ENCODE measurements at regions of chr3 and their contacts with region 1.

Region 1: GRCh38 chr3:107927361-107928083 is 163.3 kb downstream of the CD47 start:
- DNase-seq: peak; percentile 75
- H3K4me3 ChIP-seq: peak overlapping the region; percentile 38 to 59 (median 55)
- H3K27ac ChIP-seq: peak overlapping the region in 1 of 4 donors; percentile 5
- H3K4me1 ChIP-seq: peaks cover 0 to 11% (median 6%) of the 10 kb centered on the region in 4 donors
- H3K27me3 ChIP-seq: no peaks in the 10 kb centered on the region
- CTCF ChIP-seq: peak; percentile 77 to 94 (median 86)
- EP300 ChIP-seq: no peak
- POLR2A ChIP-seq: no peak

Region 2: DNA sequence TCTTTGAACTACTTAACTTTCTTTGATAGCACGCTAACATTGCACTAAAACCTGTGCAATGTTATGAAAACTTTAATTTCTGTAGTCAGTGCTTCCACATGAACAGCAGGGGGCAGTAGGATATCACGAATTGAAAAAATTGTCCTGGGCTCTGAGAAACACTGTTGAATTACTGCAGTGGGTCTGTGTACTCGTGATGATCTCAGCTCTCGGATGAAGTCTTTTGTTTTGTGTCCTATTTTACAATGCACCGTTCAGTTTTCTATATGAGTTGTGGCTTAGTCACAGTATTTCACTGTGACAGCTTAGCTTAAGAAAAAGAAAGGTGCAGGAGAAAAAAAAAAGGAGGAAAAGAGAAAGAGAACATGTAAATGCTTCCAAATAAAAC is 691.6 kb before region 1 on chr3:
- intact Hi-C with region 1: loop called (anchors 2 kb)
- DNase-seq: peak; percentile 64
- H3K4me3 ChIP-seq: peak overlapping the region; percentile 28 to 53 (median 50)
- H3K27ac ChIP-seq: peak overlapping the region; percentile 66 to 74 (median 68)
- H3K4me1 ChIP-seq: peaks cover 0 to 22% (median 8%) of the 10 kb centered on the region in 4 donors
- H3K27me3 ChIP-seq: no peaks in the 10 kb centered on the region
- CTCF ChIP-seq: peak; percentile 79 to 91 (median 83)
- EP300 ChIP-seq: no peak
- POLR2A ChIP-seq: no peak

Region 3: DNA sequence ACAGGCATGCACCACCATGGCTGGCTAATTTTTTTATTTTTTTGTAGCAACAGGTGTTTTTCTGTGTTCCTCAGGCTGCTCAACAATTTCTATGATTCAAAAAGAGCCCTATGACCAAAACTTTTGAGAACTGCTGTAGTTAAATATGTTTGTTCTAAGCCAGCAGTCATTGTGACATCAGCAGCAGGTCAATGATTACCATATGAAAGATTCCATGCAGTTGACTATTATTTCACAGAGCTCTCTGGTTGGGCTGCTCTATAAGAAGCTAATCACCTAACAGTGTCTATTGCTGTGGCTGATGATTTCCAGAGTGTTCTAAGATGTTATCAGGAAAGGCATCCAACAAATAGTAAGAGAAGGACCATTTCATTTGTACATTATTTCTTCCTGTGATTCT is 550.4 kb before region 1 on chr3 and contains the start of gene CCDC54:
- intact Hi-C with region 1: no loop called
- DNase-seq: no peak
- H3K4me3 ChIP-seq: no peak within 1 kb of the TSS
- H3K27ac ChIP-seq: no peak within 1 kb of the TSS
- H3K4me1 ChIP-seq: no peaks in the 10 kb centered on the region
- H3K27me3 ChIP-seq: no peaks in the 10 kb centered on the region
- CTCF ChIP-seq: no peak
- EP300 ChIP-seq: no peak
- POLR2A ChIP-seq: no peak
- total RNA-seq, gene CCDC54: not detected

Region 4: GRCh38 chr3:107810171-107811071 is 117.1 kb before region 1 on chr3:
- intact Hi-C with region 1: loop called (anchors 10 kb)
- DNase-seq: no peak
- H3K4me3 ChIP-seq: no peak overlapping the region
- H3K27ac ChIP-seq: no peak overlapping the region
- H3K4me1 ChIP-seq: peaks cover 0 to 11% (median 0%) of the 10 kb centered on the region in 4 donors
- H3K27me3 ChIP-seq: no peaks in the 10 kb centered on the region
- CTCF ChIP-seq: no peak
- EP300 ChIP-seq: no peak
- POLR2A ChIP-seq: no peak

Region 5: DNA sequence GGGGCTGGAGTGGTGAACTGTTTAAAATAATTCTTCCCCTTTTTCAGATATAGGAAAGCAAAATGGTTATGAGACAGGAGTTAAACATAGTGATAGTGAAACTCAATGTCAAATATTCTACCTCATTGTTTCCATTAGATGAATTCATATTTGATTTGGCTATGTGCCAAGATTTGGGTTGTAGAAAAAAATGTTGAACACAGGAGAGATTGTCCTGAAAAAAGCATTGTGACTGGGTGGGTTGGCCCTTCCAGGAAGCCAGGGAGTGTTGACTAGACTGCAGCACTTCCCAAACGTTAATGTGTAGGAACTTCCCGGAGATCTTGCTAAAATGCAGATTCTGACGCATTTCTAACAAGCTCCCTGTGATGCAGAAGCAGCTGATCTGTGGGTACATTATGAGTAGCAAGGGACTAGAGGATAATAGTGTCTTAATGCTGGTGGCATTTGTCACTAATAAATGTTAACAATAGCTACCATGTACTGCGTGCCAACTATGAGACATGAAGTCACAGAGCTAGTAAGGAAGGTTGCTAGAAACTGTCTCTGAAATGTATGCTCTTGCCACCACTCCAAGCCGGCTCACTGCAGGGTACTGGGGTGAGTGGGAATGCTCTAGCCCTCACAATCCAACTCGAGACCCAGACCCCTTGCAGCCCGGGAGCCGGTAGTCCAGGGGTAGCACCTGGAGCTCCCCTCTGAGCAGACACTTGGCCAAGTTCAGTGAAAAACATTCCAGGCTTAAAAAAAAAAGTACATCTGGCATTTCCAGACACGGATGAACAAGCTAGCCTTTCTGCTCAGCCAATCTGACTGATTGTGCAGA is 42.7 kb after region 1 on chr3:
- intact Hi-C with region 1: loop called (anchors 1 kb)
- DNase-seq: no peak
- H3K4me3 ChIP-seq: no peak overlapping the region
- H3K27ac ChIP-seq: no peak overlapping the region
- H3K4me1 ChIP-seq: peaks cover 0 to 15% (median 10%) of the 10 kb centered on the region in 4 donors
- H3K27me3 ChIP-seq: no peaks in the 10 kb centered on the region
- CTCF ChIP-seq: no peak
- EP300 ChIP-seq: peak in 1 of 4 donors; percentile 38
- POLR2A ChIP-seq: no peak

Region 6: DNA sequence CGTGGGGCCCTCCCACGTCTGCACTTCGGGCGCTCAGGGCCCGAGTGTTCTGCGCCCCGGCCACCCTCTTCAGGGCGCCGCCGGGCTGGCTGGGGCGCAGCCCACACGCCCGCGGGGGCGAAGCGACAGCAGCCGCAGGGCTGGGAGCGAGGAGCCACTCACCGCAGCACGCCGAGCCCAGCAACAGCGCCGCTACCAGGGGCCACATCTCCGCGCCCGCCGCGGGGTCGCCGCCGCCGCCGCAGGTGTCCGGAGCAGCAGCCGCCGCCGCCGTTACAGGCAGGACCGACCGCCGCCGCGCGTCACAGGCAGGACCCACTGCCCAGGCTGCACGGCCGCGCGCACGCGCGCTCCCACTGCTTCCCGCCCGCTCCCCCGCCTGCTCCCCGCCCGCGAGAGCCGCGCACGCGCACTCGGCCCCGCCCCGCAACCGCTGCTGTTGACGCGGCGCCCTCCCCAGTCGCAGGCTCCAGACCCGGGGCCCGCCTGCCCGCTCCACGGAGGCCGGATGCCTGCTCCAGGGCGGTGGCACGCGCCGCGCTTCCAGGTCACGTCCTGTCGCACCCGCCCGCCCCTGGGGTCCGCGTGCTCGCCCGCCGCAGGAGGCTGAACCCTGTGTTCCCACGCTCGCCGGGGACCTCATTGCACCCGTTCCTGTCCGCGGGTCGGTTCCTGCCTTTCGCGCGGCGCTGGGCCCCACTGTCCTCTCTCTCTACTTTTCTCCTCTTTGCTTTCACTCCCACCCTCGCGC is 163.4 kb after region 1 on chr3 and contains the start of gene CD47:
- intact Hi-C with region 1: loop called (anchors 2 kb)
- DNase-seq: peak; percentile 97
- H3K4me3 ChIP-seq: peak within 1 kb of the TSS; percentile 75 to 99 (median 93)
- H3K27ac ChIP-seq: peak within 1 kb of the TSS; percentile 88 to 95 (median 92)
- H3K4me1 ChIP-seq: peaks cover 0 to 34% (median 4%) of the 10 kb centered on the region in 4 donors
- H3K27me3 ChIP-seq: no peaks in the 10 kb centered on the region
- CTCF ChIP-seq: no peak
- EP300 ChIP-seq: no peak
- POLR2A ChIP-seq: peak in 1 of 2 donors; percentile 49
- total RNA-seq, gene CD47: 52.1 to 67.1 (median 62.0) TPM

Region 7: GRCh38 chr3:108153451-108153981 is 226.0 kb after region 1 on chr3:
- intact Hi-C with region 1: no loop called
- DNase-seq: no peak
- H3K4me3 ChIP-seq: no peak overlapping the region
- H3K27ac ChIP-seq: no peak overlapping the region
- H3K4me1 ChIP-seq: no peaks in the 10 kb centered on the region
- H3K27me3 ChIP-seq: no peaks in the 10 kb centered on the region
- CTCF ChIP-seq: no peak
- EP300 ChIP-seq: no peak
- POLR2A ChIP-seq: no peak